ENCODE measurements at regions of chr13 and their contacts with region 1.

Region 1: GRCh38 chr13:25574437-25575411 is 202.9 kb downstream of the ATP8A2 start:
- DNase-seq: peak; percentile 57
- CTCF ChIP-seq: peak; percentile 90

Region 2: GRCh38 chr13:25585000-25585399 is 10.3 kb after region 1 on chr13:
- CTCF ChIA-PET with region 1: interaction called, 23 read pairs
- POLR2A ChIA-PET with region 1: no interaction called
- DNase-seq: no peak
- CTCF ChIP-seq: no peak

Region 3: DNA sequence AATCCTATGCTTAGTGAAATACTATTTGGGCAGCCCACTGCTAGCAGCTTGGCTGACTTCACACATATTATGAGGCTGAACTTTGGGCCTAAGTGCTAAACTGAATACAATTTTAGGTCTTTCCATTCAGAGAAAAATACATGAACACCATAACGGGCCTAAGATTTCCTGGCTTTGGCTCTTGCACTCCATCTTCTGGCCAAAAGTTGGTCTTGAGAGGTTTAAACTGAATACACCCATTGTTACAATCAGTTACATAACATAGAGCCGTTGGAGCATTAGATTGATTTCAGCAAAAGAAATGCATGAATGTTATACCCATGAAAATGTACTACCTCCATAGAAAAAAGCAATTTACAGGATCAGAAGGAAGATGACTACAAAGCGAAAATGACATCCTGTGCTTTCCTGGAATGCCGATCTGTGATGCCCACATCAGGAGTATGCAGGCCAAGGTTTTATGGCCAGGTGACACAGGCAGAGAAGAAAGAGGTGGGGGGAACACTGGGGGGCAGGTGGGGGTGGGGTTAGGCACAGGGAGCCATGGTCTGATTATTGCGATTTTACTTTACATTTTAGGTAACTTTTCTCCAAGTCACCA is 488.2 kb after region 1 on chr13:
- CTCF ChIA-PET with region 1: interaction called, 11 read pairs
- POLR2A ChIA-PET with region 1: no interaction called
- DNase-seq: peak; percentile 18
- CTCF ChIP-seq: peak; percentile 55

Region 4: GRCh38 chr13:26071691-26072090 is 497.0 kb after region 1 on chr13:
- CTCF ChIA-PET with region 1: interaction called, 13 read pairs
- POLR2A ChIA-PET with region 1: no interaction called
- DNase-seq: no peak
- CTCF ChIP-seq: no peak

Region 5: GRCh38 chr13:26698392-26699196 is 1123.9 kb after region 1 on chr13:
- CTCF ChIA-PET with region 1: interaction called, 11 read pairs
- POLR2A ChIA-PET with region 1: no interaction called
- DNase-seq: peak; percentile 84
- CTCF ChIP-seq: peak; percentile 82

Measured in GM10248 (cell line).